ENCODE measurements at regions of chr11 and their contacts with region 1.

Region 1: GRCh38 chr11:84780689-84781293 is 846.4 kb downstream of the DLG2 start:
- DNase-seq: no peak
- ATAC-seq: no peak
- H3K4me3 ChIP-seq: no peak overlapping the region
- H3K27ac ChIP-seq: no peak overlapping the region
- H3K4me1 ChIP-seq: no peaks in the 10 kb centered on the region
- H3K27me3 ChIP-seq: no peaks in the 10 kb centered on the region
- CTCF ChIP-seq: peak in 8 of 9 donors; percentile 6 to 59 (median 48)

Region 2: GRCh38 chr11:84930863-84931262 is 150.1 kb after region 1 on chr11:
- intact Hi-C with region 1: loop called in 1 of 10 experiments (anchors 10 kb)
- DNase-seq: no peak
- ATAC-seq: no peak
- H3K4me3 ChIP-seq: no peak overlapping the region
- H3K27ac ChIP-seq: no peak overlapping the region
- H3K4me1 ChIP-seq: no peaks in the 10 kb centered on the region
- H3K27me3 ChIP-seq: no peaks in the 10 kb centered on the region
- CTCF ChIP-seq: no peak

Region 3: GRCh38 chr11:85589373-85589772 is 808.6 kb after region 1 on chr11:
- intact Hi-C with region 1: loop called in 2 of 10 experiments (anchors 10 kb)
- DNase-seq: no peak
- ATAC-seq: no peak
- H3K4me3 ChIP-seq: no peak overlapping the region
- H3K27ac ChIP-seq: no peak overlapping the region
- H3K4me1 ChIP-seq: no peaks in the 10 kb centered on the region
- H3K27me3 ChIP-seq: no peaks in the 10 kb centered on the region
- CTCF ChIP-seq: no peak